ENCODE measurements at regions of chr7 and their contacts with region 1.

Region 1: DNA sequence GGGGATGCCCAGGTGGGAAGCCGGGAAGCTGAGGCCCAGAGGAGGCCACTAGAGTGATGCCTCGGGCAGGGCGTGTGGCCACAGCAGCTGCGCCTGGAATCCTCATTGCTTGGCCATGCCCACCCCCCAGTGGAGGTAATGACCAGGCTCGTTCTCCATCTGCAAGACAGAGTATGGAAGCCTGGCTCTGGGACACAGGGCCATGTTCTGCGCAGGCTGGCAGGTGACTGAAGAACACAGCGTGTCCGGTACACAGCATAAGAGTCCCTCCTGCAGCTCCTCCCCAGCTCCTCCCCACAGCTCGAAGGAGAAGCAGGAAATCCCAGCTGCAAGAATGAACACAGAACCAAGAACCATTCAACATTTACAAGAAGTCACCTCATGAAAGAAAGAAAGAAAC is 64.8 kb downstream of the SMURF1 start:
- DNase-seq: no peak
- ATAC-seq: peak in 3 of 4 donors; percentile 39 to 74 (median 67)
- H3K4me3 ChIP-seq: no peak overlapping the region
- H3K27ac ChIP-seq: no peak overlapping the region
- H3K4me1 ChIP-seq: peaks cover 15% of the 10 kb centered on the region
- H3K27me3 ChIP-seq: no peaks in the 10 kb centered on the region
- CTCF ChIP-seq: no peak

Region 2: DNA sequence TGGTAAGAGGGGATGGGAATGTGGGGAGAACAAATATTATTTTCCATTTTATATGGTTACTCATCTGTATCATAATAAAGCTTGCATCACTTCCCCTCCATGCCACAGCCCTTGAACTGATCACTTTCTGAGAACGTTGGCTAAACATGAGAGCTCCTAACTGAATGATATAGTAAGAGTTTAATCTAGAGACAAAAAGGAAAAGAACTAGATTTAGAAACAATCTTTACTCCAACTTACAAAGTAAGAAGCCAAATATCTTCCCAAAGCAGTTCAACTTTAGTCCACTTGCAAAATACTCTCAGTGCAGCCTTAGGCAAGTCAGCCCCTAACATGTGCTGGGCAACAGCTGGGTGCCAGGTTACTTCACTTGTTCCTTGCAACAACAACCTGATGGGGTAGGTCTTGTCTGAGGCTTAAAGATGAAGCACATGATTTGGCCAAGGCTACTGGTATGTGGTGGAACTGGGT is 44.5 kb after region 1 on chr7:
- intact Hi-C with region 1: loop called in 1 of 2 experiments (anchors 10 kb)
- DNase-seq: peak in 1 of 2 donors; percentile 27
- ATAC-seq: peak in 3 of 4 donors; percentile 61 to 80 (median 79)
- H3K4me3 ChIP-seq: no peak overlapping the region
- H3K27ac ChIP-seq: no peak overlapping the region
- H3K4me1 ChIP-seq: peaks cover 58% of the 10 kb centered on the region
- H3K27me3 ChIP-seq: no peaks in the 10 kb centered on the region
- CTCF ChIP-seq: no peak

Measured in psoas muscle (tissue), 8 donors.